Left lung (tissue), 14 donors: ENCODE measurements at regions of chr12 and their contacts with region 1.

Region 1: DNA sequence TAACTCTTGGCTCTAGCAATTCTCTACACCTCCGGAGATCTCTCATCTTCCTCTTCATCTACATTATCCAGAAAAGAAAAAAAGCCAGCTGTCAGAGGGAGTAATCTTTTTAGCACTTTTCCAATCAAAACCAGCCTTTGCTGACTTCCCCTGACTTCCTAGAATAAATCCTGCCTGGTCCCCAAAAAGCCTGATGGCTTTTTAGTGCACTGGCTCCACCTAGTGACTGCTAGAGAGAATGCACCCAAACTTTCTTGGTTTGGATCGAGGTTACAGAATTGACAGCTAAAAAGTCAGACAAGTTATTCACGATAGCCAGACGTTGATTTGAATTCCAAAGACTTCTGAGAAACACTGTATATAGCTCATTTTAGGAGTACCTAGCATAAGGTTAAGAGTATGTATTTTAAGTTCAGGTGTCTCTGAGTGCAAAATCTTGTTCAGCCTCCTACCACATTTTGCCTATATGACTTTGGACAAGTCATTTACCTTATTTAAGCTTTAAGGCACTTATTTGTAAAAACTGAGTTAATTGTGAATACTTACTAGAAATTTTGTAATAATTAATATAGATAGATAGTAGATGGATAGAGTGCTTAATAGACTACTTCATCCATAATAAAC is 185.7 kb upstream of the GRIN2B start:
- DNase-seq: peak in 2 of 4 donors; percentile 46 to 66
- ATAC-seq: peak; percentile 81
- H3K4me3 ChIP-seq: no peak overlapping the region
- H3K27ac ChIP-seq: no peak overlapping the region
- H3K4me1 ChIP-seq: no peaks in the 10 kb centered on the region
- H3K27me3 ChIP-seq: no peaks in the 10 kb centered on the region
- CTCF ChIP-seq: peak; percentile 79 to 81

Region 2: DNA sequence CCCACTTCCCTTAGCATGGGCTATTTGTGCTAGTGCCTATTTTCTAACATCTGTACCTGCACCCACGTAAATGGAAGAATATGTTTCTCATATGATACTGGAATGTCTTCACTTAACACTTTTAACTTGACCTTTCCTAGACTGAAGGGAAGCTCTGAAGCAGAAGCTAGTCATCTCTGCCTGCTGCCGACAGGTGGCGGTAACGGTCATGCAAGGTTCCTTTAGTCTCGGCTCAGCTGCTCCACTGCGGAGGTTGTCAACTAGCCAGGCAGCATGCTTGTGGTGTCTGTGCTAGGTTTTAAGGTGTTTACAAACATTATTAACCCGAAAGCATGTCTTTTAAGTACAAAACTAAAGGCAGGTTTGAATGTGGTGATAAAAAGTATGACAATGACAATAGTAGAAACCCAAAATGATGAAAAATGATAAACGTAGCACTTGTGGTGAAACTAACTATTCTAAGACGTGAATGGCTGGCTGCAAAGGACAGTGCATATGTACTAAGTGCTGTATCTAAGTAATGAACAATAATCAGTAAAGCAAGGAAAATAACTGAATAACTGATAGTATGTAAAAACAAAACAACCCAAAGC is 302.9 kb before region 1 on chr12:
- intact Hi-C with region 1: loop called in 1 of 2 experiments (anchors 10 kb)
- DNase-seq: peak; percentile 51 to 80 (median 74)
- ATAC-seq: peak; percentile 94
- H3K4me3 ChIP-seq: no peak overlapping the region
- H3K27ac ChIP-seq: no peak overlapping the region
- H3K4me1 ChIP-seq: no peaks in the 10 kb centered on the region
- H3K27me3 ChIP-seq: peaks cover 0 to 18% of the 10 kb centered on the region in 2 donors
- CTCF ChIP-seq: peak; percentile 74 to 88

Region 3: DNA sequence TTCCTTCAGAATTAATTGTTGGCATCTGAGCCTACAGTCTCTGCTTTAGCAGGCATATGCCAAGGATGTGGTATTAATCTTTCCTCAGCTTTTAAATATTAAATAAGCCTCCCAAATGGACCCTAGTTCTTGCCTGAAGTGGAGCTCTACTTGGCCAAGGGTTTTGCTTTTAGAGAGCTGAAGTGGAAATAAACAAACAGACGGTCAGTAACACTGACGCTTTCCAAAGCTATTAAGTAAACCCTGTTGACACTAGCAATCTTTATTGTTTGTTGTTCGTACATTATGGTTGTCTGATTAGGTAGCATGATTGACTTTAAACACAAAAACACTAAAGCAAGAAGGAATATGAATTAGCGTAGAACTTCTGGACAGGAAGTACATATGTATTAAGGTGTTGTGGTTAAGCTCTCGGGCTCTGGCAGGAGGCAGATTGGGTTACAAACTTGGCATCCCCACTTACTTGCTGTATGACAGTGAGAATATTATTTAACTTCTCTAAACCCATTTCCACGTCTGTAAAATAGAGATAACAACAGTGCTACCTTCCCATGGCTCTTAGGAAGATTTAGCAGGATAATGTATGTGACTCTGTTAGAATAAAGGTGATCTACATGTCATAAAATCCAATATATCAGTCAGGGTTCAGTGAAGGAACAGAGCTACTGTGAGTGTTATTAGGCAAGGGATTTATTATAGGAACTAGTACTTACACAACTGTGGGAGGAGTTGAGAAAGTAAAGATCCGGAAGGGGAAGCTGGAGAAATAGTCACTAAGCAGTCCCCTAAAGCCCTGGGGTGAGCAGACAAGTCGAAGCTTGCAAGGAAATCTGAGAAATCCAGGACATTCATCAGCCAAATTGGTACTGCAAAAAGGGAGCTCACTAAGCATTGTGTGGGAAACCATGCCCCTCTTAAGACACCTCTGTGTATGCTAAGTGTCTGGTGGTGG is 106.1 kb after region 1 on chr12:
- intact Hi-C with region 1: no loop called
- DNase-seq: peak in 1 of 4 donors; percentile 66
- ATAC-seq: peak; percentile 76
- H3K4me3 ChIP-seq: no peak overlapping the region
- H3K27ac ChIP-seq: peak overlapping the region; percentile 67 to 87
- H3K4me1 ChIP-seq: peaks cover 0 to 42% of the 10 kb centered on the region in 2 donors
- H3K27me3 ChIP-seq: no peaks in the 10 kb centered on the region
- CTCF ChIP-seq: no peak